Caco-2 (cell line): ENCODE measurements at regions of chr4 and their contacts with region 1.

Region 1: GRCh38 chr4:185831125-185831815 is 19.3 kb upstream of the SORBS2 start:
- DNase-seq: peak; percentile 28 to 66
- H3K4me3 ChIP-seq: no peak overlapping the region
- H3K4me3 Mint-ChIP-seq: peak overlapping the region; percentile 36
- H3K27ac Mint-ChIP-seq: peak overlapping the region; percentile 65
- H3K4me1 ChIP-seq: peaks cover 56% of the 10 kb centered on the region
- H3K4me1 Mint-ChIP-seq: peaks cover 32% of the 10 kb centered on the region
- H3K27me3 ChIP-seq: no peaks in the 10 kb centered on the region
- H3K27me3 Mint-ChIP-seq: no peaks in the 10 kb centered on the region
- CTCF ChIP-seq: no peak

Region 2: DNA sequence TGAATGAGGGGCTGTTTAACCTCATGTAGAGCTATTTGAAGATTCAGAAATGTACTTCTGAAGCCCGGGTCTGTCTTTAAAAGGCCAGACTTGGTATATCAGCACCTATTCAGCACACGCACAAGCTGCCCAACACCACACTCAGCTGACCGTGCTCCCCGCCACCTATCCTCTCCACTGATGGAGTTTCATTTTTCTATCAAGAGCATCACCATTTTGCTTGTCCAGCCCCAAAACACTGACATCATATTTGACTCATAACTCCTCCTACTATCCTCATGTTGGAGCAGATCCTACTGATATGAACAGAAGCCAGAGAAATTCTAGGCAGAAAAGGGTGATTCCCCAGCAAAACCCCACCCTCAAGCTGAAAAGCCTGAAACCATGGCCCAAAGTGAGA is 119.5 kb before region 1 on chr4:
- CTCF ChIA-PET with region 1: no interaction called
- POLR2A ChIA-PET with region 1: no interaction called
- intact Hi-C with region 1: loop called (anchors 1 kb)
- DNase-seq: no peak
- H3K4me3 ChIP-seq: no peak overlapping the region
- H3K4me3 Mint-ChIP-seq: peak overlapping the region; percentile 44
- H3K27ac Mint-ChIP-seq: peak overlapping the region; percentile 96
- H3K4me1 ChIP-seq: peaks cover 37% of the 10 kb centered on the region
- H3K4me1 Mint-ChIP-seq: peaks cover 35% of the 10 kb centered on the region
- H3K27me3 ChIP-seq: no peaks in the 10 kb centered on the region
- H3K27me3 Mint-ChIP-seq: no peaks in the 10 kb centered on the region
- CTCF ChIP-seq: no peak

Region 3: DNA sequence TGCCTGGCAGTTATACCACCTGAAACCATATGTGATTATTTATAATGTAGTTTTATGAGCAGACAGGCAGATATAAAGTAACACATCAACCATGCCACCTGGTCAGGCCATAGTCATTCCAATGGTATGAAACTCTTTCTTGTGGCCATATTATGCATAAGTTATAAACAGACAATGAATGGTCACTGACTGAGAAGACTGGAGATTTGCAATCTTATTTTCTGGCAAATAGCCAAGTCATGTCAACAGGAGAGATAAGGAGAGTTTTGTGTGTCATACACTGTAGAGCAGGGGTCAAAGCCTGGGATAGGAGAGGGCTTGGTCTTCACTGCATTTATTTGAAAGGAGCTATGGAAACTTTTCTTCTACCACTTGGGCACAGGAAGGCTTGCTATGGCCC is 48.7 kb before region 1 on chr4:
- CTCF ChIA-PET with region 1: no interaction called
- POLR2A ChIA-PET with region 1: no interaction called
- intact Hi-C with region 1: no loop called
- DNase-seq: no peak
- H3K4me3 ChIP-seq: no peak overlapping the region
- H3K4me3 Mint-ChIP-seq: no peak overlapping the region
- H3K27ac Mint-ChIP-seq: no peak overlapping the region
- H3K4me1 ChIP-seq: no peaks in the 10 kb centered on the region
- H3K4me1 Mint-ChIP-seq: peaks cover 7% of the 10 kb centered on the region
- H3K27me3 ChIP-seq: no peaks in the 10 kb centered on the region
- H3K27me3 Mint-ChIP-seq: no peaks in the 10 kb centered on the region
- CTCF ChIP-seq: no peak

Region 4: GRCh38 chr4:186104114-186104889 is 273.0 kb after region 1 on chr4 and contains the start of gene FAM149A:
- CTCF ChIA-PET with region 1: no interaction called
- POLR2A ChIA-PET with region 1: no interaction called
- intact Hi-C with region 1: no loop called
- DNase-seq: peak; percentile 69 to 79
- H3K4me3 ChIP-seq: peak within 1 kb of the TSS; percentile 67
- H3K4me3 Mint-ChIP-seq: peak within 1 kb of the TSS; percentile 60
- H3K27ac Mint-ChIP-seq: peak within 1 kb of the TSS; percentile 82
- H3K4me1 ChIP-seq: 0 out of 2 replicates have a peak, but pooled peaks cover 4% of the 10 kb centered on the region
- H3K4me1 Mint-ChIP-seq: no peaks in the 10 kb centered on the region
- H3K27me3 ChIP-seq: no peaks in the 10 kb centered on the region
- H3K27me3 Mint-ChIP-seq: no peaks in the 10 kb centered on the region
- CTCF ChIP-seq: no peak
- total RNA-seq, gene FAM149A: 5.1 and 6.6 TPM in 2 replicates